Natural killer cell (primary cell): ENCODE measurements at regions of chr4 and their contacts with region 1.

Region 1: DNA sequence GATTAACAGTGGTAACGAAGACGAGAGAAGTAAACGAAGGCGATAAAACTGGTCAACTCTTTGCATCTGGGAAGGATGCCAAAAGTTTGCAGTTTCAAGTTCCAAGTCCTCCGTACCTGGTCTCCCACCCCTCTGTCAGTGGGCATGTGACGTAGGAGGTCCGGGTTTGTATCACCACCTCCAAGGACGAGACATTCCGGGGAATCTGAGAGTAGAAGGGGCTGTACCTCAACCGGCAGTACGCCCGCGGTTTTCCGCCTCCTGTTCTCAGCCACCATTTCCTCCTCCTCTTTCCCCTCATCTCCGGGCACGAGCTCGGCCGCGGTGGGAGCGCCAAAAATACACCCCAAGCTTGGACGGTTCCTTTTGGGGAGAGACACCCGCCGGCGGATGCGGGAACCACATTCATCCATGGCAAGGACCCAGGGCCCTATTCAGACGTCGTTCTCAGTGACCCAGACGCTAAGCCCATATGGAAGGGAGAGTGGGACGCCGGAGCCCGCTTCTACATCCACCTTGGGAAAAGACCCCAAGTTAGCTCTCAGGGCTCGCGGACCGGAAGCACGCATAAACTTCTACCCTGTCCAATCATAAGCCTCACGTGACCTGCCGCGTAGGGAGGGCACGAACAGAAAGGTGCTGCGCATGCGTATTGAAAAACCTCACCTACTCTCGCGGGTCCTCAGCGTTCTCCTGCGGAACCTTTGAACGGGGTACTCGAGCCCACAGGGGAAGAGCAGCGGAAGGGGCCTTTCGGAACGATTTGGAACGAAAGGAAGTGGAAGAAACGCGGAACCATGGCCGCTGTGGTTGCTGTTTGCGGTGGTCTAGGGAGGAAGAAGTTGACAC is at the starts of genes HELQ and MRPS18C:
- DNase-seq: peak; percentile 89 to 99
- ATAC-seq: peak; percentile 89 to 96 (median 93)
- H3K4me3 ChIP-seq: peak within 1 kb of the TSS; percentile 78
- H3K4me3 Mint-ChIP-seq: peak within 1 kb of the TSS; percentile 100
- H3K27ac ChIP-seq: peak within 1 kb of the TSS; percentile 94
- H3K27ac Mint-ChIP-seq: peak within 1 kb of the TSS; percentile 97 to 100
- H3K4me1 ChIP-seq: peaks cover 9% of the 10 kb centered on the region
- H3K4me1 Mint-ChIP-seq: peaks cover 35 to 39% of the 10 kb centered on the region in 2 donors
- H3K27me3 ChIP-seq: no peaks in the 10 kb centered on the region
- H3K27me3 Mint-ChIP-seq: no peaks in the 10 kb centered on the region
- CTCF ChIP-seq: no peak
- total RNA-seq, gene HELQ: 19.8 to 33.6 (median 29.9) TPM
- total RNA-seq, gene MRPS18C: 14.4 to 26.0 (median 18.1) TPM

Region 2: DNA sequence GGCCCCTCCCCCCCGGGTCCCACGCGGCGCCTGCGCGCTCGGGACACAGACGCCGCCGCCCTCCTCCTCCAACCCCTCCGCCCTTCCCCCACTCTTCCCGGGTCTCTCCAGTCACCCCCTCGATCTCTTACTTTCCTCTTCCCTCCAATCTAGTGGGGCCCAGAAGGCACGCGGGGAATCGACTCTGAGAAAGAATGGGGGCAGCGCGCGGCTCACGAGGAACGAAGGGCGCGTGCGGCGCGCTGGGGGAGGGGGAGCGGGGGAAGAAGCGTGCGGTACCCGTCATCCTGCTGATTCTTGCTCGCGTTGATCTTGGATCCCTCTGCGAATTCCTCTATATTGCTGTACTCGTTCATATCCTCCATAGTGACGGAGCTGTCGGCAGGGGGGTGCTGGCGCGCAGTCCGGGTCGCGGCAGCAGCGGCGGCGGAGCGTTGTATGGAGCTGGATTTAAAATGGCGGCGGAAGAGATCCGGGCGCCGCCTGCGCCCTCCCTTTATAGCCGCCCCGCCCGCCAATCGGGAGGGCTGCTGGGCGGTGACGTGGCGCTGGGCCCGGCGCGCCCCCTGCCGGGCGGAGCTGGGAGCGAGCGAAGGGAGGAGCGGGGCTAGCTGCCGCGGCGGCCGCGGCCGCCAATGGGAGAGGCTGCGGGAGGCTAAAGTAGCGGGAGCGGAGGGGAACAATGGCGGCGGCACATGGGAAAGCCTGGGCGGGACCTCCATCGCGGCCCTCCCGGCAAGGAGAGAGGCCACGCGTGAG is 1026.4 kb before region 1 on chr4:
- intact Hi-C with region 1: loop called (anchors 10 kb)
- DNase-seq: peak; percentile 94 to 97
- ATAC-seq: peak; percentile 67 to 87 (median 70)
- H3K4me3 ChIP-seq: peak overlapping the region; percentile 100
- H3K4me3 Mint-ChIP-seq: peak overlapping the region; percentile 100
- H3K27ac ChIP-seq: peak overlapping the region; percentile 100
- H3K27ac Mint-ChIP-seq: peak overlapping the region; percentile 96
- H3K4me1 ChIP-seq: peaks cover 15% of the 10 kb centered on the region
- H3K4me1 Mint-ChIP-seq: peaks cover 46 to 60% of the 10 kb centered on the region in 2 donors
- H3K27me3 ChIP-seq: no peaks in the 10 kb centered on the region
- H3K27me3 Mint-ChIP-seq: no peaks in the 10 kb centered on the region
- CTCF ChIP-seq: peak; percentile 94

Region 3: DNA sequence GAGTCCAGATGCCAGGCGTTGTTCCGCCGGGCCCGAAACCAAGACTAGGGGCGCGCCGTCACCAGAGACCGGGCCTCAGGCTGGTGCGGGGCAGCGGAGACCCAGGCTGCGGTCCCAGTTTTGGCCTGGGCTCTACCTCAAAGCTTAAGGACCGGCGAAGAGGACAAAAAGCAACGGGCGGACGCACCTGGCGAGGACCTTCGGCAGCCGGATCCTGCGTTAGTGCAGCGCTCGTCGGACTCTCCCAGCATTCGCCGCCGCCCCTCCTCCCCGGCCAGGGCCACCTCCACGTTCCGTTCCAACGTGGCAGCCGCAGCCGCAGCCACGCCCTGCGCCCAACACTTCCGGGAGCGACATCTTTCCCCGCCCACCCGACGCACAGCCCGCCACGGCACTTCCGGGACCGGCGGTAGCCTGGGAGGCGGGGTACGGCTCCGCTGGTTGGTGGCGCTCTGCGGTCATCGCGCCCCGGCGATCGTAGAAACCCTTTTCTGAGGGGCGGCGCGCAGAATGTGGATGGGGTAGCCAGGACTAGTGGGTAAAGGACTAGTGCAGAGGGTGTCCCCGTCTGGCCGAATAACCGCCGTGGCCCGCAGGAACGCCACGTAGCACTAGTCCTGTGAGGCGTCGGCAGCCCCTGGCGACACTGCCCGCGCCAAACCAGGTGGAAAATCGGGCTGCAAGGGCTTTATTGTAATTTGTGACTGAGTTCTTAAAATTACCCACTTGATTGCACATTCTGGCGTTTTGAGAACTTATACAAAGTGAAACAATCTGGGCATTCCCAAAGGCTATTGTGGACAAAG is 564.4 kb before region 1 on chr4 and contains the start of gene SEC31A:
- intact Hi-C with region 1: loop called (anchors 2 kb)
- DNase-seq: peak; percentile 96 to 98
- ATAC-seq: peak; percentile 92 to 98 (median 93)
- H3K4me3 ChIP-seq: peak within 1 kb of the TSS; percentile 96
- H3K4me3 Mint-ChIP-seq: peak within 1 kb of the TSS; percentile 96
- H3K27ac ChIP-seq: peak within 1 kb of the TSS; percentile 89
- H3K27ac Mint-ChIP-seq: peak within 1 kb of the TSS; percentile 97 to 99
- H3K4me1 ChIP-seq: peaks cover 7% of the 10 kb centered on the region
- H3K4me1 Mint-ChIP-seq: peaks cover 19 to 33% of the 10 kb centered on the region in 2 donors
- H3K27me3 ChIP-seq: no peaks in the 10 kb centered on the region
- H3K27me3 Mint-ChIP-seq: no peaks in the 10 kb centered on the region
- CTCF ChIP-seq: no peak
- total RNA-seq, gene SEC31A: 176 to 183 (median 177) TPM

Region 4: GRCh38 chr4:83217721-83218522 is 237.6 kb before region 1 on chr4:
- intact Hi-C with region 1: loop called (anchors 10 kb)
- DNase-seq: peak; percentile 60 to 90
- ATAC-seq: peak; percentile 80 to 95 (median 93)
- H3K4me3 ChIP-seq: no peak overlapping the region
- H3K4me3 Mint-ChIP-seq: peak overlapping the region; percentile 77
- H3K27ac ChIP-seq: peak overlapping the region; percentile 88
- H3K27ac Mint-ChIP-seq: peak overlapping the region; percentile 83 to 96
- H3K4me1 ChIP-seq: peaks cover 81% of the 10 kb centered on the region
- H3K4me1 Mint-ChIP-seq: peaks cover 92 to 94% of the 10 kb centered on the region in 2 donors
- H3K27me3 ChIP-seq: no peaks in the 10 kb centered on the region
- H3K27me3 Mint-ChIP-seq: no peaks in the 10 kb centered on the region
- CTCF ChIP-seq: no peak

Region 5: DNA sequence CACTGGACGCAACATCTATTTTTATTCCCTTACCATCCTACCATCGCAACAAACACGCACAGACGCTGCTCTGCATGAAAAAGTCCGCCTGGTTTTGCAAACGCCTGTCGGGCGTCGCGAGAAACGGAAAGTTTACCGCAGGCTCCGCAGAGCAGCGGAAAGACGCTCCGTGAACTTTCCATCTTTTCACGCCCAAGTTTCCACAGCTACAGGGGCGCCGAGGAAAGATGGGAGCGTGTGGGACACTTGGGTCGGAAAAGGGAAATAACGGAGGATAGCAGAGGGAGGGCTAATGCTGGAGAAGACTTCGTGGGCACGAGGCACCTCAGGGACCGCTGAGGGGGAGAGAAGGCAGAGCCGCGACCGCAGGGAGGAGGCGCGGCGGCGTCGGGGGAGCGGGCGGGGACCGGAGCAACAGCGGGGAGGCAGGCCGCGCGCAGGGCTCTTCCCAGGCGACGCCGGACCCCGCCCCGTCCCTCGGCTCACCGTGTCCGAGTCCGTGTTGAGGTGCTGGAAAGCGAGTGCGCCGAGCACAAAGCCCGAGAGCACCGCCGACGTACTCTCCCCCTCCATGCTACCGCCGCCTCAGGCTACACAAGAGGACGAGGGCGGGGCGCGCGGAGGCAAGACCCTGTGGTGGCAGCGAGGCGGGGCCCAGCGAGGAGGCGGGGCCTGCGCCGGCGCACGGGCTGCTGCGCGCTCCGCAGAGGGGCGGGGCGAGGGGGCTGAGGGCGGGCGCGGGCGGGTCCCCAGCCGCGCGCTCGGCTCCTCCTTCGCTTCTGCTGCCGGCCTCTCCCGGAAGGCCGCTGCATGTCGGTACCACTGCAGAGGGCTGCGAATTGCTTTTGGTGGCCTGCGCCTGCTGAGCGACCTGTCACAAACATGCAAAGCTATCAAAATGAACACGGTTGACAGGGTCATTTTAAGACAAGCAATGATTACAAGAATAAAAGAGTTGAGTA is 29.3 kb after region 1 on chr4 and contains the start of gene ABRAXAS1:
- intact Hi-C with region 1: loop called (anchors 1 kb)
- DNase-seq: peak; percentile 93 to 97
- ATAC-seq: peak; percentile 95 to 100 (median 97)
- H3K4me3 ChIP-seq: peak within 1 kb of the TSS; percentile 67
- H3K4me3 Mint-ChIP-seq: peak within 1 kb of the TSS; percentile 99
- H3K27ac ChIP-seq: peak within 1 kb of the TSS; percentile 67
- H3K27ac Mint-ChIP-seq: peak within 1 kb of the TSS; percentile 92 to 96
- H3K4me1 ChIP-seq: peaks cover 11% of the 10 kb centered on the region
- H3K4me1 Mint-ChIP-seq: peaks cover 14 to 21% of the 10 kb centered on the region in 2 donors
- H3K27me3 ChIP-seq: no peaks in the 10 kb centered on the region
- H3K27me3 Mint-ChIP-seq: no peaks in the 10 kb centered on the region
- CTCF ChIP-seq: no peak
- total RNA-seq, gene ABRAXAS1: 10.7 to 14.0 (median 13.9) TPM